ENCODE measurements at regions of chr3 and their contacts with region 1.

Region 1: DNA sequence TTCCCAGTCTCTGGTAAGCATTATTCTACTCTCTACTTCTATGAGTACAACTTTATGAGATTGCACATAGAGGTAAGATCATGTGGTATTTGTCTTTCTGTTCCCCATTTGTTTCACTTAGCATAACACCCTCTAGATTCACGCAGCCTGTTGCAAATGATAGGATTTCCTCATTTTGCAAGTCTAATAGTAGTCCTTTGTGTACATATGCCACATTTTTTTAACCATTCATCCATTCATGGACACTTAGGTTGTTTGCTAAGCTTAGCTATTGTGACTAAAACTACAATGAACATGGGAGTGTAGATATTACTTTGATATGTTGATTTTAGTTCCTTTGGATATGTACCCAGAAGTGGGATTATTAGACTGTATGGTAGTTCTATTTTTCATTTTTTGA is 717.9 kb upstream of the ALCAM start:
- DNase-seq: no peak
- H3K4me3 ChIP-seq: no peak overlapping the region
- H3K27ac ChIP-seq: no peak overlapping the region
- H3K4me1 ChIP-seq: no peaks in the 10 kb centered on the region
- H3K27me3 ChIP-seq: no peaks in the 10 kb centered on the region
- CTCF ChIP-seq: no peak
- POLR2A ChIP-seq: no peak

Region 2: DNA sequence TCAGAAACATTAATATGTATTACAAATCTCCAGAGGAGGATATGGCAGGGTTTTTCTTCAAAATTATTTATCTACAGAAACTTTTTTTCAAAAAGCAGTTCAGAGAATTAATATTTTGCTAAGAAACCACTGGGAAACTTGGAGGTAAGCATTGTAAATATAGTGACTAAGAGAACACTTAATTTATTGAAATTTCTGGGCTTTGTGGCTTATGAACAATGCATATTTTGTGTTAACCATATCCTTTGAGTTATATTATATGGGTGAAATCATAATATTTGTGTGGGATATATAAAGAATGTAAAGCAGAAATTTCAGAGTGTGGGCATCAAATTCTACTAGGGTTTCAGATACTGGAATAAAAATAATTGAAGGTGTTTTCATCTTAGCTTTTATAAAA is 1154.8 kb before region 1 on chr3:
- intact Hi-C with region 1: loop called (anchors 5 kb)
- DNase-seq: no peak
- H3K4me3 ChIP-seq: no peak overlapping the region
- H3K27ac ChIP-seq: no peak overlapping the region
- H3K4me1 ChIP-seq: no peaks in the 10 kb centered on the region
- H3K27me3 ChIP-seq: no peaks in the 10 kb centered on the region
- CTCF ChIP-seq: no peak
- POLR2A ChIP-seq: no peak